Right ventricle myocardium superior (tissue), 1 donor: ENCODE measurements at regions of chr4 and their contacts with region 1.

Region 1: GRCh38 chr4:6327041-6327917 is 57.6 kb downstream of the WFS1 start:
- DNase-seq: peak; percentile 88
- ATAC-seq: peak; percentile 86

Region 2: GRCh38 chr4:5998333-5998936 is 328.8 kb before region 1 on chr4:
- intact Hi-C with region 1: loop called (anchors 5 kb)
- DNase-seq: no peak
- ATAC-seq: peak; percentile 79

Region 3: DNA sequence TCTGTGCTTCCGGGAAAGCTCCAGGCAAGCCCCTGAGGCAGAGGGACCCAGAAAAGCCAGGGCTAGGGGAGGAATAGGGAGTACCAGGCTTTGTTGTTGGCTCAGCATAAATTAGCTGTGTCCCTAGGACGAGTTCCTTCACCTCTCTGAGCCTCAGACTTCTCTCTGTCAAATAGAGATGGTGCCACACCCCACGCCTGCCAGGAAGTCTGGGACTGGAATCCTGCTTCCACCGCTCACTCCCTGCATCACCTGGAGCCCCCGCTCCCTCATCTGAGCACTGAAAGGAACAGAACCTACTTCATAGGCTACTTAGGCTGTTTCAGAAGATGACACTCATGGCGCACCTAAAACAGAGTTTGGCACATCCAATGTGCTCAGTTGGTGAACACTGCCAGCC is 118.9 kb before region 1 on chr4:
- intact Hi-C with region 1: no loop called
- DNase-seq: no peak
- ATAC-seq: no peak

Region 4: GRCh38 chr4:6264225-6264540 is 63.1 kb before region 1 on chr4:
- intact Hi-C with region 1: loop called (anchors 5 kb)
- DNase-seq: no peak
- ATAC-seq: peak; percentile 72

Region 5: DNA sequence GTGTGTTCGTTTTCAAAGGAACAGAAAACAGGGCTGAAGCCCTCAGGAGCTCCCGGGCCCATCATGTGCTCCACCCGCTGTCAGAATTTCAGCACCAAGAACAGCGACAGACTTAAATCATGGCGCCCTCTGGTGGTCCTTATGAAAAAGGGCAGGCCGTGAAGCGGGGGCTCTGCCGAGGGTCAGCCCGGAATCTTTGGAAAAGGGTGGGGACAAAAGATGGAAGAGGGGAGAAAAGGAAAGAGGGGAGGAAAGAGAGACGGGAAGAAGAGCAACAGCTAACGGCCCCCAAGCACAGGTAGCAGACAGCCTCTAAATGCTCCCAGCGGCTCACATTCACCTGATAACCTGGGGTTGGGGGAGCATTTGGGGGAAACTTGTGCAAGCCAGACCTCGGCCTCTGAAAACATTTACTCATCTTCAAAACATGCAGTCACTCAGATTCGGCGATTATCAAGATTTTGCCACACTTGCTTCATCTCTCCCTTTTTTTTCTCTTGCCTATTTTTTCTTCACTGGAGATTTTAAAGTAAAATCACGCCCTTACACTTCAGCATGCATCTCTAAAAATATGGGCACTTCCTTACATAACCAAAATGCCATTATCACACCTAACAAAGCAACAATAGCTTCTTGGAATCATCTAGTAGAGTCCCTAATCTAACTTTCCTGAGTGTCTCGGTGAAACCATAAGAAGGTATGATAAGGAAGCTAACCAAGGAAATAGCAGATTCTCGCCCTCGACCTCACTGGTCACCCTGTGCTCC is 219.6 kb after region 1 on chr4:
- intact Hi-C with region 1: loop called (anchors 5 kb)
- DNase-seq: peak; percentile 47
- ATAC-seq: no peak